ENCODE measurements at regions of chr3 and their contacts with region 1.

Region 1: DNA sequence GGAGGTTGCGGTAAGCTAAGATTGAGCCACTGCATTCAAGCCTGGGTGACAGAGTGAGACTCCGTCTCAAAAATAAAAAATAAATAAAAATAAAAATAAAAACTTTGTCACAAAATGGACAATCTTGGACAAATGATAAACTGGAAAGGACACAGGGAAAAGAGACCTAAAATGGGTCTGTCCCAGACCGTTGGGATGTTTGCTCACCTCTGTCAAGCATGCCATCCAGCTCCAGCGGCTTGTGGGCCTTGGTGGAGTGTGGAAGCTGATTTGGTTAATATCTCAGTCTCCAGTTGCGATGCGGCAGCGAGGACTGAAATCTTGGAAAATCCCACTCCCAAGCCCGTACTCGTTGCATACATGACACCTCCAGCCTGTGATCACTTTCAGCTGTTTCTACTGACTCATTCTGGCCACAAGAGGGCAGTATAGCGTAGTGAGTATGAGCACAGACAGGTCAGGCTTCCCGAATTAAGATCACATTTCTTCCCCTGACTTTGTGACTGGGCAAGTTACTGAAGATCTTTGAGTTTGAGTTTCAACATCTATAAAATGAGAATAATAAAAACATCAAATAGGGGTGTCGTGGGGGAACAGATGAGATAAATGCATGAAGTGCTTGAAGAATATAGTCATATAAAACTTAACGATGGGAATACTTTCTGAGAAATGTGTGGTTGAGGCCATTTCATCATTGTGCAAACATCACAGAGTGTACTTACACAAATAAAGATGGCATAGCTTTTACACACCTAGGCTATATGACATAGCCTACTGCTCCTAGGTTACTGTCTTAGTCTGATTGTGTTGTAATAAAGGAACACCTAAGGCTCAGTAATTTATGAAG is 19.6 kb upstream of the MOBP start:
- DNase-seq: peak; percentile 6 to 85 (median 44)
- ATAC-seq: peak; percentile 79
- H3K4me3 ChIP-seq: no peak overlapping the region
- H3K4me3 Mint-ChIP-seq: no peak overlapping the region
- H3K27ac ChIP-seq: no peak overlapping the region
- H3K27ac Mint-ChIP-seq: no peak overlapping the region
- H3K4me1 ChIP-seq: peaks cover 2% of the 10 kb centered on the region
- H3K4me1 Mint-ChIP-seq: no peaks in the 10 kb centered on the region
- H3K27me3 ChIP-seq: peaks cover 0 to 2% of the 10 kb centered on the region in 2 experiments
- H3K27me3 Mint-ChIP-seq: no peaks in the 10 kb centered on the region
- CTCF ChIP-seq: peak; percentile 80

Region 2: DNA sequence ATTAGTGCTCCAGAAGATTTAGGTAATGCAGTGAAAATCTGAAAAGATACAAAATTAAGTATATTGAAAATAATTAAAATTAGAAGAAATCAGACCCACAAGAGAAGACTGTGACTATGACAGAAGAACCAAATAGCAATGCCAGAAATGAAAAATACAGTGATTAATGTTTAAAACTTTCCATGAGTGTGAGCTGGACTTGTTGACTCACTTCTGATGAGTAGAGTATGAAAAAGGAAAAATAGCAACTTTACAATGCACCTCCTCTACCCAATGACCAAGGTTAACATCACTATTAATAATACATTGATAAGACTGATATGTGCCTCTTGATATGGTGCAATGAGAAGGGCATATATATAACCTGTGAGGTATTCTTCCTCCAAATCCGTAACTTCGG is 1221.6 kb before region 1 on chr3:
- CTCF ChIA-PET with region 1: no interaction called
- POLR2A ChIA-PET with region 1: no interaction called
- intact Hi-C with region 1: no loop called
- DNase-seq: no peak
- ATAC-seq: no peak
- H3K4me3 ChIP-seq: no peak overlapping the region
- H3K4me3 Mint-ChIP-seq: no peak overlapping the region
- H3K27ac ChIP-seq: no peak overlapping the region
- H3K27ac Mint-ChIP-seq: no peak overlapping the region
- H3K4me1 ChIP-seq: no peaks in the 10 kb centered on the region
- H3K4me1 Mint-ChIP-seq: no peaks in the 10 kb centered on the region
- H3K27me3 ChIP-seq: no peaks in the 10 kb centered on the region
- H3K27me3 Mint-ChIP-seq: no peaks in the 10 kb centered on the region
- CTCF ChIP-seq: no peak

Region 3: GRCh38 chr3:38689774-38690173 is 758.1 kb before region 1 on chr3:
- CTCF ChIA-PET with region 1: no interaction called
- POLR2A ChIA-PET with region 1: no interaction called
- intact Hi-C with region 1: no loop called
- DNase-seq: no peak
- ATAC-seq: no peak
- H3K4me3 ChIP-seq: no peak overlapping the region
- H3K4me3 Mint-ChIP-seq: no peak overlapping the region
- H3K27ac ChIP-seq: no peak overlapping the region
- H3K27ac Mint-ChIP-seq: no peak overlapping the region
- H3K4me1 ChIP-seq: no peaks in the 10 kb centered on the region
- H3K4me1 Mint-ChIP-seq: no peaks in the 10 kb centered on the region
- H3K27me3 ChIP-seq: no peaks in the 10 kb centered on the region
- H3K27me3 Mint-ChIP-seq: no peaks in the 10 kb centered on the region
- CTCF ChIP-seq: no peak

Region 4: DNA sequence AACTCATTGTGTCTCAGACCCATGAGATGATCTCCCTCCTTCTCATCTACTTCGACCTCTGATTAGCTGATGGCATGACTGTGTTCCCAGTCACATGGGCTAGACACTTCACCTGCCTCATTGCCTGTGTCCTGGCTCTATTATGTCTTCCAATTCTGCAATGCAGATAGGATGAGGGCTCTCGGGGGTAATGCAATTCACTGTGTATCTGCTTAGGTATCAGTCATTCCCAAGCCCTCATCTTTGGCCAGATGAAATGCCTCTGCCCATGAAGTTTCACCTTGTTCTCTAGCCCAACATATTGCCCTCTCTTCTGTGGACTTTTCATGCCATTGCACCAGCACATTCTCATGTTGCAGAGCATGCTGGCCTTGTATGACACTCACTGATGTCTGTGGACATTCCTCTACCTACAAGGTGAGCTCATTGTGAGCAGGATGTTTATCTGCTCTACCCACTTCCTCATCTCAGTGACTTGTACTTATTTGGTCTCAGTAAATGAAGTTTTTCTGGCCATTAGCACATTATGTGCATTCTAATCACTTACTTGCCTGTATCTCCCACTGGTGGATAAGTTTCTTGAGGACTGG is 51.9 kb after region 1 on chr3:
- CTCF ChIA-PET with region 1: no interaction called
- POLR2A ChIA-PET with region 1: no interaction called
- intact Hi-C with region 1: loop called in 1 of 2 experiments (anchors 5 kb)
- DNase-seq: no peak
- ATAC-seq: no peak
- H3K4me3 ChIP-seq: no peak overlapping the region
- H3K4me3 Mint-ChIP-seq: no peak overlapping the region
- H3K27ac ChIP-seq: no peak overlapping the region
- H3K27ac Mint-ChIP-seq: no peak overlapping the region
- H3K4me1 ChIP-seq: peaks cover 2% of the 10 kb centered on the region
- H3K4me1 Mint-ChIP-seq: no peaks in the 10 kb centered on the region
- H3K27me3 ChIP-seq: peaks cover 19 to 52% of the 10 kb centered on the region in 2 experiments
- H3K27me3 Mint-ChIP-seq: peaks cover 41% of the 10 kb centered on the region
- CTCF ChIP-seq: no peak

Region 5: DNA sequence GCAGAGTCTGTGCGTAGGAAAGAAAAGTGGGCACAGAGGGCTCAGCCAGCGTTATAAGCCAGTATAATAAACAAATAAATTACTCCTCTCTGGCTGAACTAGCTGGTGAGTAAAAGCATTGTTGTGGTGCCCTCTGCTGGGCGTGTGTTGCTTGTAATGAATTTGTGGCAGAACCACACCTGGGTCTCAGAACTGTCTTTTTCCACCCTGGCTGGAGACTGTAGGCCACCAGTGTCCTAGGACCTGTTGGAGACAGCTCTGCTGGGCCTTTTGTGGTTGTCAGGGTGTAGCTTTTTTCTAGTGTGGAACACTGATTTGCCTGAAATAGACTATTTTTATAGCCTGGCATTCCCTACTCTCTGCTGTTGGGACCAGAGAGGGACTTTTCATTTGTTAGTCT is 731.2 kb after region 1 on chr3:
- CTCF ChIA-PET with region 1: no interaction called
- POLR2A ChIA-PET with region 1: no interaction called
- intact Hi-C with region 1: loop called in 1 of 2 experiments (anchors 10 kb)
- DNase-seq: peak; percentile 19 to 58 (median 38)
- ATAC-seq: no peak
- H3K4me3 ChIP-seq: no peak overlapping the region
- H3K4me3 Mint-ChIP-seq: no peak overlapping the region
- H3K27ac ChIP-seq: no peak overlapping the region
- H3K27ac Mint-ChIP-seq: no peak overlapping the region
- H3K4me1 ChIP-seq: no peaks in the 10 kb centered on the region
- H3K4me1 Mint-ChIP-seq: no peaks in the 10 kb centered on the region
- H3K27me3 ChIP-seq: no peaks in the 10 kb centered on the region
- H3K27me3 Mint-ChIP-seq: no peaks in the 10 kb centered on the region
- CTCF ChIP-seq: peak; percentile 69

Region 6: GRCh38 chr3:40317061-40317855 is 869.4 kb after region 1 on chr3:
- CTCF ChIA-PET with region 1: interaction called, 6 read pairs
- POLR2A ChIA-PET with region 1: no interaction called
- intact Hi-C with region 1: loop called in 1 of 2 experiments (anchors 1 kb)
- DNase-seq: peak in 11 of 14 experiments; percentile 5 to 83 (median 26)
- ATAC-seq: peak; percentile 92
- H3K4me3 ChIP-seq: no peak overlapping the region
- H3K4me3 Mint-ChIP-seq: no peak overlapping the region
- H3K27ac ChIP-seq: no peak overlapping the region
- H3K27ac Mint-ChIP-seq: no peak overlapping the region
- H3K4me1 ChIP-seq: no peaks in the 10 kb centered on the region
- H3K4me1 Mint-ChIP-seq: peaks cover 16% of the 10 kb centered on the region
- H3K27me3 ChIP-seq: no peaks in the 10 kb centered on the region
- H3K27me3 Mint-ChIP-seq: no peaks in the 10 kb centered on the region
- CTCF ChIP-seq: peak; percentile 82

Measured in CD4-positive, alpha-beta T cell (primary cell).